K562 (cell line): ENCODE measurements at regions of chr6 and their contacts with region 1.

Region 1: DNA sequence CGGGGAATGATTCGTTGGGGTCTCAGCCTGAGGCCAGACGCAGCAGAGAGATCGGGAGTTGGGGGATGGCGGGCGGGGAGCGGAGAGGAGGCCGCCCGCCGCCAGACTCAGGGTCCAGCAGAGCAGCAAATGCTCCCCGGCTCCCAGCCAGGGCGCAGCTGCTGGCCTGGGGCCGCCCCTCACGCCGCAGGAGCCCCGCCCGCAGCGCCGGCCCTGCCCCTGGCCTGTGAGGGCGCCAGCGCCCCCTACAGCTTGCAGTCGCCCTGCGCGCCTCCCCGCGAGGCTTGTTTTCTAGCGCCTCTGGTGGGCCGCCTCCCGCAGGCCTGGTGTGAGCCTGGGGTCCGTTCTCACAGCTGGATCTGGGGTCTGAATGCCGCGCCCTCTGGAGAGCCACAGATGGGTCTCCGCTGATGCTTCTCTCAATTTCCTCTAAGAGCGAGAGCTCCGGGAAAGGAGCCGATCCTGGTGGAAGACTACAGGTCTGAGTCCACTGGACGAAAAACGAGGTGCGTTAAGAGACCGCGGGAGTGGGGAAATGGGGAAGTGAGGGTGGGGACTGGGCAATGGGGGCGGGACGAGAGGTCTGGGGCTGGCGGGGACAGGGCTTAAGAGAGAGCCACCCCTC is 29.9 kb downstream of the TRIM38 start:
- DNase-seq: peak; percentile 95 to 98 (median 95)
- ATAC-seq: peak; percentile 93
- H3K4me3 ChIP-seq: peak overlapping the region; percentile 72
- H3K27ac ChIP-seq: peak overlapping the region; percentile 95
- H3K4me1 ChIP-seq: peaks cover 10 to 11% of the 10 kb centered on the region in 2 experiments
- H3K27me3 ChIP-seq: no peaks in the 10 kb centered on the region
- CTCF ChIP-seq: peak; percentile 100
- EP300 ChIP-seq: peak; percentile 44
- POLR2A ChIP-seq: peak; percentile 93
- RAD21 ChIP-seq: peak; percentile 82 to 91

Region 2: GRCh38 chr6:25717866-25718740 is 274.4 kb before region 1 on chr6:
- CTCF ChIA-PET with region 1: no interaction called
- POLR2A ChIA-PET with region 1: no interaction called
- in situ Hi-C with region 1: no loop called
- intact Hi-C with region 1: loop called (anchors 5 kb)
- DNase-seq: peak; percentile 35 to 54 (median 48)
- ATAC-seq: peak; percentile 59; the same call in 2 of the 3 replicates
- H3K4me3 ChIP-seq: no peak overlapping the region
- H3K27ac ChIP-seq: no peak overlapping the region
- H3K4me1 ChIP-seq: no peaks in the 10 kb centered on the region
- H3K27me3 ChIP-seq: peaks cover 2 to 7% of the 10 kb centered on the region in 2 experiments; a peak in 2 of 5 replicates
- CTCF ChIP-seq: peak; percentile 52 to 75 (median 53); a peak in 5 of 6 replicates
- EP300 ChIP-seq: no peak
- POLR2A ChIP-seq: no peak
- RAD21 ChIP-seq: peak; percentile 74 to 79

Region 3: DNA sequence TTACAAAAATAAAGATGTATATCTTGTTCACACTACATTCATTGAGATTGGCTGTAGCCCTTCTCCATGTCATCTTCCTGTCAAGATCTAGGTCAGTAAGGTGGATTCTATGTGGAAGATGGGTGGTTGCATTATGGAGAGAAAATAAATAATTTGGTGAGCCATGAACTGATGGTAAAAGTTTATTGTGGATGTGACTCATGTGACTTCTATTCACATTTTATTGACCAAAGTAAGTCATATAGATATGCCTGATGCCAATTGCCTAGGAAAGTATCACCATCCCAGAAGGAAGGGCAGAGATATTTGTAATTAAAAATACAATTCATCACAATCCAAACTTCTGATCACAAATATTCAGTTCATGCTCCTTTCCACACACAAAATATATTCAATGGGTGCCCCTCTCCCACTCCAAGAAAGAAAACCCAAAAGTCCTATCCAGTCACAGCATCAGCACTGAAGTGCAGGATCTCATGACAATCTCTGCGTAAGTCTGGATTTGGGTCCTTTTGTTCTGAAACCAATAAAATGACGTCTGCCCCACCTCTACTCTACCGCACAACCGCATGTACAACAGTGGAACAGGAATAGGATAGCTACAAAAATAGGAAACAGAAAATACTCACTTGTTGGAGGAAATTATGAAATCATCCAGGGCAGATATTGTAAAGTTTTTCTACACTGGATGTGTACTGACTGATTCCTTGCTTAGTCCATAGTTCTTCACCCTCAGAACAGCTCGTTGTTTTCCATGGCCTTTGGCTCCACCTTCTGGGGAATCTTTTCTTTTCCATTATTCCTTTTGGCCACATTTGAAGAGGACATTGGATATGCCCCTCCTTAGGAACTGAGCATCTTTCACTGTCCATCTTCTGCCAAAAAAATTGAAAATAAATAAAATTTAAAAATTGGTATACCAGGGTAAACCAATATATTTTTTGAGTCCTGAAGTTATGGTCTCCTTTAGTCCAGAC is 102.4 kb before region 1 on chr6:
- CTCF ChIA-PET with region 1: interaction called, 4 read pairs
- POLR2A ChIA-PET with region 1: no interaction called
- in situ Hi-C with region 1: no loop called
- intact Hi-C with region 1: loop called (anchors 5 kb)
- DNase-seq: peak; percentile 16 to 56 (median 22)
- ATAC-seq: peak; percentile 87
- H3K4me3 ChIP-seq: no peak overlapping the region
- H3K27ac ChIP-seq: no peak overlapping the region
- H3K4me1 ChIP-seq: no peaks in the 10 kb centered on the region
- H3K27me3 ChIP-seq: no peaks in the 10 kb centered on the region
- CTCF ChIP-seq: peak; percentile 55 to 83 (median 64)
- EP300 ChIP-seq: no peak
- POLR2A ChIP-seq: no peak
- RAD21 ChIP-seq: peak; percentile 95 to 96

Region 4: DNA sequence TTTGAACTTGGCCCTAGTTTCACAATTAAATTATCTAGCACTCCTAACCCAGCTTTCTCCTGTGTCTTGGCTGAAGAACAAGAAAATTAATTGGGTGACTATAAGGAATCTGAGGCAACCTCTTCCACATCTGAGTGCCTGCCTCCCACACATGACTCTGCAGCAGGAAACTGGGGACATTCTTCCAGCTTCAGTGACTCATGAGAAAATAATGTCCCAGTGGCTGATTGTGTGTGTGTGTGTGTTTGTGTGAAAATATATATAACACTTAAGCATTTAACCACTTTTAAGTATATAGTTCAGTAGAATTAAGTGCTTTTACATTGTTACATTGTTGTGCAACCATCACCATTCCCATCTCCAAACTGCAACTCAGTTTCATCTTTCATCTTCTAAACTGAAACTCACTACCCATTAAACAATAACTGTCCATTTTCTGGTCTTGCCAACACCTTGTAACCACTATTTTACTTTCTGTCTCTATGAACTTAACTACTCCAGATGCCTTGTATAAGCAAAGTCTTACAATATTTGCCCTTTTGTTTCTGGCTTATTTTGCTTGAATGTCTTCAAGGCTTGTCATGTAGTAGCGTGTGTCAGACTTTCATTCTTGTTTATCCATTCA is 21.2 kb before region 1 on chr6:
- CTCF ChIA-PET with region 1: interaction called, 3 read pairs
- POLR2A ChIA-PET with region 1: interaction called, 20 read pairs
- in situ Hi-C with region 1: no loop called
- intact Hi-C with region 1: no loop called
- DNase-seq: peak; percentile 63 to 87 (median 68)
- ATAC-seq: peak; percentile 92
- H3K4me3 ChIP-seq: no peak overlapping the region
- H3K27ac ChIP-seq: peak overlapping the region; percentile 16; the same call in 2 of the 3 replicates
- H3K4me1 ChIP-seq: peaks cover 8 to 19% of the 10 kb centered on the region in 2 experiments
- H3K27me3 ChIP-seq: no peaks in the 10 kb centered on the region
- CTCF ChIP-seq: no peak
- EP300 ChIP-seq: peak; percentile 87
- POLR2A ChIP-seq: no peak
- RAD21 ChIP-seq: no peak

Region 5: DNA sequence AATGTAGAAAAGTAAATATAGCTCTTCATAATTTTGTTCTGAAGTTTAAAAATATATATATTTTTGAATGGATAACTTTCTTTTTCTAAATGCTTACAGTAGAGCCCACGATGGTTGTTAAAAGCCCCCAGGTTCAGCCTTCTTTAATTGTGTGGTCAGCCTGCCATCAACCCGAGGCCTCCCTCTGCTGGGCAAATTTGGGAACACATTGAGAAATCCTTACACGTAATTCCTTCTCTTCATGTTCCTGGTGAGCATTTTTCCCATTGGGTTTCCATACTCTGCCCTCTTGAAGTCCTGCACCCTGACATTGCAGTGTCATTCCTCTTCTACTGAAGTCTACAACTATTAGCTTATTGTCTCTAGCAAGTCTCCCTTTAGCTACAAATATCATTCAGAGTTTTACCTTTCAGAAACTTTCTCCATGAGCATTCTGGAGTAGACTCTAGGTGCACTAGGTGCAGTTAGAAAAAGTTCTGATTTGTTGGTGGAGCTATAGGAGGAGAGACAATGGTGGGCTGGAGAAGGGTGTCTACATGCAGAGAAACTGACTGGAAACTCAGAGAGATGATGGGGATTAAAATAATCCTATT is 10.7 kb after region 1 on chr6:
- CTCF ChIA-PET with region 1: no interaction called
- POLR2A ChIA-PET with region 1: interaction called, 12 read pairs
- in situ Hi-C with region 1: no loop called
- intact Hi-C with region 1: no loop called
- DNase-seq: peak; percentile 75 to 81 (median 76)
- ATAC-seq: peak; percentile 87
- H3K4me3 ChIP-seq: no peak overlapping the region
- H3K27ac ChIP-seq: no peak overlapping the region
- H3K4me1 ChIP-seq: peaks cover 5 to 10% of the 10 kb centered on the region in 2 experiments; a peak in 4 of 5 replicates
- H3K27me3 ChIP-seq: no peaks in the 10 kb centered on the region
- CTCF ChIP-seq: peak; percentile 77 to 87 (median 87)
- EP300 ChIP-seq: no peak
- POLR2A ChIP-seq: no peak
- RAD21 ChIP-seq: peak; percentile 64 to 77

Region 6: GRCh38 chr6:26097268-26097875 is 104.8 kb after region 1 on chr6:
- CTCF ChIA-PET with region 1: no interaction called
- POLR2A ChIA-PET with region 1: no interaction called
- in situ Hi-C with region 1: no loop called
- intact Hi-C with region 1: no loop called
- DNase-seq: peak; percentile 67 to 85 (median 77)
- ATAC-seq: peak; percentile 91
- H3K4me3 ChIP-seq: no peak overlapping the region
- H3K27ac ChIP-seq: no peak overlapping the region
- H3K4me1 ChIP-seq: peaks cover 0 to 8% of the 10 kb centered on the region in 2 experiments; a peak in 2 of 5 replicates
- H3K27me3 ChIP-seq: no peaks in the 10 kb centered on the region
- CTCF ChIP-seq: peak; percentile 80 to 87 (median 85)
- EP300 ChIP-seq: no peak
- POLR2A ChIP-seq: no peak
- RAD21 ChIP-seq: peak; percentile 96 to 98

Region 7: DNA sequence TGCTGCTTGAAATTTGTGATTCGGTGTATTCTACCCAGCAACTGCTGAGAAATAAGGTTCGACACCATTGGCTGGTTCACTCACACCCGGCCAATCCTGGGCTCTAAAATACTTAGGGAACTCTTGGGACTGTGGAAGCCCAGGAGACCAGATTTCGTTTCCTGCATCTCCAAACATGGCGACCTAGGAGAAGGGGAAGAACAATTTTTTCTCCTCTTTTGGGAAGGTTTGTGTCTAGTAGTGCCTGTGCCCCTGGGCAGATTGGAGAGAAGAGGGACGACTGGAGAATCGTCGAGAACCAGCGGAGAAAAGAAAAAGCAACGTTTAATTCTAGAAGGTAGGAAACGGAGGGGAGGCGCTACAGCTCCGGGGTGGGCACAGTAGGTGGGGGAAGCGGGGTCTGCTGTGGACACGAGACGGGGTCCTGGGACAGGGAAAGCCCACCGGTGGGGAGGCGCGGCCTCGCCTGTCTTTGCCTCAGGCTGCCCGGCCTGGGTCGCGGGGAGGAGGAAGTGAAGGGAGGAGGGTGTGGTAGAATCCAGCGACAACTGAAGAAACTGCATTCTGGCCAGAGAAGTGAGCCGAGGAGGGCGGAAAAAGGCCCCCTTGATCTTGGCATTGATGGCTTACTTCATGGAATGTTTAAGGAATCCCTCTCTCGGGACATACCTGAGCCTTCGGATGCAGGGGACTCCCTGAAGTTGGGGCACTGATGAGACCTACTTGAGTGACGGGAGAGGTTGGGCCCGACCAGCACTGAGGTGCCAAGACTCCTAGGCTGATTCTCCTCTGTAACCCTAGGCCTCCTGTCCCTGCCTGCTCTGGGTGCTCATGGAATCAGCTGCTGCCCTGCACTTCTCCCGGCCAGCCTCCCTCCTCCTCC is 465.5 kb after region 1 on chr6 and contains the start of gene BTN2A1:
- CTCF ChIA-PET with region 1: no interaction called
- POLR2A ChIA-PET with region 1: no interaction called
- in situ Hi-C with region 1: no loop called
- intact Hi-C with region 1: no loop called
- DNase-seq: peak; percentile 94 to 96 (median 96)
- ATAC-seq: peak; percentile 99
- H3K4me3 ChIP-seq: peak within 1 kb of the TSS; percentile 93
- H3K27ac ChIP-seq: peak within 1 kb of the TSS; percentile 87
- H3K4me1 ChIP-seq: peaks cover 6 to 14% of the 10 kb centered on the region in 2 experiments; a peak in 3 of 5 replicates
- H3K27me3 ChIP-seq: no peaks in the 10 kb centered on the region
- CTCF ChIP-seq: 0 out of 6 replicates have a peak, but pooled peaks of 2 of the 3 experiments have one; percentile 8 to 18
- EP300 ChIP-seq: no peak
- POLR2A ChIP-seq: peak; percentile 80
- RAD21 ChIP-seq: no peak
- polyA plus RNA-seq, gene BTN2A1: 7.0 to 16.4 TPM